Caco-2 (cell line): ENCODE measurements at regions of chr4 and their contacts with region 1.

Region 1: GRCh38 chr4:15366702-15367101 is 61.1 kb upstream of the C1QTNF7 start:
- DNase-seq: no peak
- H3K4me3 ChIP-seq: no peak overlapping the region
- H3K4me3 Mint-ChIP-seq: no peak overlapping the region
- H3K27ac Mint-ChIP-seq: no peak overlapping the region
- H3K4me1 ChIP-seq: no peaks in the 10 kb centered on the region
- H3K4me1 Mint-ChIP-seq: no peaks in the 10 kb centered on the region
- H3K27me3 ChIP-seq: no peaks in the 10 kb centered on the region
- H3K27me3 Mint-ChIP-seq: peaks cover 10% of the 10 kb centered on the region
- CTCF ChIP-seq: no peak

Region 2: GRCh38 chr4:15238720-15239119 is 128.0 kb before region 1 on chr4:
- CTCF ChIA-PET with region 1: no interaction called
- POLR2A ChIA-PET with region 1: no interaction called
- intact Hi-C with region 1: loop called (anchors 1 kb)
- DNase-seq: peak in 1 of 2 experiments; percentile 34
- H3K4me3 ChIP-seq: no peak overlapping the region
- H3K4me3 Mint-ChIP-seq: no peak overlapping the region
- H3K27ac Mint-ChIP-seq: no peak overlapping the region
- H3K4me1 ChIP-seq: no peaks in the 10 kb centered on the region
- H3K4me1 Mint-ChIP-seq: peaks cover 6% of the 10 kb centered on the region
- H3K27me3 ChIP-seq: no peaks in the 10 kb centered on the region
- H3K27me3 Mint-ChIP-seq: peaks cover 9% of the 10 kb centered on the region
- CTCF ChIP-seq: peak; percentile 32 to 34

Region 3: DNA sequence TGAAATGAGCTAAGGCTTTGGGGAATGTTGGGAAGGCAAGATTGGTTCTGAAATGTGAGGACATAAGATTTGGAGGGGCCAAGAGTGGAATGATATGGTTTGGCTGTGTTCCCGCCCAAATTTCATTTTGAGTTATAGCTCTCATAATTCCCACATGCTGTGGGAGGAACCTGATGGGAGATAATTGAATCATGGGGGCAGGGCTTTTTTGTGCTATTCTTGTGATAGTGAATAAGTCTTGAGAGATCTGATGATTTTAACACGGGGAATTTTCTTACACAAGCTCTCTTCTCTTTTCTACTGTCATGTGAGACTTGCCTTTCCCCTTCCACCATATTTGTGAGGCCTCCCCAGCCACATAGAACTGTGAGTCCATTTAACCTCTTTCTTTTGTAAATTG is 96.5 kb before region 1 on chr4:
- CTCF ChIA-PET with region 1: no interaction called
- POLR2A ChIA-PET with region 1: no interaction called
- intact Hi-C with region 1: no loop called
- DNase-seq: no peak
- H3K4me3 ChIP-seq: no peak overlapping the region
- H3K4me3 Mint-ChIP-seq: no peak overlapping the region
- H3K27ac Mint-ChIP-seq: no peak overlapping the region
- H3K4me1 ChIP-seq: no peaks in the 10 kb centered on the region
- H3K4me1 Mint-ChIP-seq: no peaks in the 10 kb centered on the region
- H3K27me3 ChIP-seq: no peaks in the 10 kb centered on the region
- H3K27me3 Mint-ChIP-seq: no peaks in the 10 kb centered on the region
- CTCF ChIP-seq: no peak

Region 4: GRCh38 chr4:15855804-15856475 is 489.2 kb after region 1 on chr4:
- CTCF ChIA-PET with region 1: no interaction called
- POLR2A ChIA-PET with region 1: no interaction called
- intact Hi-C with region 1: no loop called
- DNase-seq: no peak
- H3K4me3 ChIP-seq: no peak overlapping the region
- H3K4me3 Mint-ChIP-seq: no peak overlapping the region
- H3K27ac Mint-ChIP-seq: no peak overlapping the region
- H3K4me1 ChIP-seq: no peaks in the 10 kb centered on the region
- H3K4me1 Mint-ChIP-seq: no peaks in the 10 kb centered on the region
- H3K27me3 ChIP-seq: no peaks in the 10 kb centered on the region
- H3K27me3 Mint-ChIP-seq: peaks cover 13% of the 10 kb centered on the region
- CTCF ChIP-seq: no peak